AG04450 (cell line): ENCODE measurements at regions of chr17 and their contacts with region 1.

Region 1: GRCh38 chr17:17573912-17574311 is 17.6 kb downstream of the PEMT start:
- DNase-seq: no peak
- H3K4me3 ChIP-seq: no peak overlapping the region
- H3K27ac ChIP-seq: no peak overlapping the region
- H3K27me3 ChIP-seq: no peaks in the 10 kb centered on the region
- CTCF ChIP-seq: no peak

Region 2: DNA sequence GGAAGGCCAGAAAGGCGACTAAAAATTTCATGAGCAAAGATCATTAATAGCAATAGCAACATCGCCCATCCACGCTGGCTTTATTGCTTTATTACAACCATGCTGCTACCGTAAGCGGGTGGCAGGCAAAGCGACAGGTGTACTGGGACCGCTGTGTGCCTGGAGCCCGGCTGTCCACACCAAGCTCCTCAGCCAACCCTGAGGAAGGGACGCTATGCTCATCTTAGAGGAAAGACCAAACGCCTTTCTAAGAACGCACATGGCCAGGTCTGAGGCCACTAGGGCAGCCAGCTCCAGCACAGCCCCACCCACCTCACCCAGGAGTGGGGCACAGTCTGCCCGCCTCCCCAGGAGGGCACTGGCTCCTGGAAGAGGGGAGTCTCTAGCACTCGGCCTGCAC is 10.4 kb before region 1 on chr17:
- CTCF ChIA-PET with region 1: interaction called, 13 read pairs
- POLR2A ChIA-PET with region 1: no interaction called
- DNase-seq: no peak
- H3K4me3 ChIP-seq: no peak overlapping the region
- H3K27ac ChIP-seq: no peak overlapping the region
- H3K27me3 ChIP-seq: no peaks in the 10 kb centered on the region
- CTCF ChIP-seq: no peak

Region 3: GRCh38 chr17:17628388-17629008 is 54.6 kb after region 1 on chr17:
- CTCF ChIA-PET with region 1: no interaction called
- POLR2A ChIA-PET with region 1: no interaction called
- DNase-seq: no peak
- H3K4me3 ChIP-seq: no peak overlapping the region
- H3K27ac ChIP-seq: no peak overlapping the region
- H3K27me3 ChIP-seq: peaks cover 9% of the 10 kb centered on the region
- CTCF ChIP-seq: no peak